Heart left ventricle (tissue), 16 donors: ENCODE measurements at regions of chr1 and their contacts with region 1.

Region 1: DNA sequence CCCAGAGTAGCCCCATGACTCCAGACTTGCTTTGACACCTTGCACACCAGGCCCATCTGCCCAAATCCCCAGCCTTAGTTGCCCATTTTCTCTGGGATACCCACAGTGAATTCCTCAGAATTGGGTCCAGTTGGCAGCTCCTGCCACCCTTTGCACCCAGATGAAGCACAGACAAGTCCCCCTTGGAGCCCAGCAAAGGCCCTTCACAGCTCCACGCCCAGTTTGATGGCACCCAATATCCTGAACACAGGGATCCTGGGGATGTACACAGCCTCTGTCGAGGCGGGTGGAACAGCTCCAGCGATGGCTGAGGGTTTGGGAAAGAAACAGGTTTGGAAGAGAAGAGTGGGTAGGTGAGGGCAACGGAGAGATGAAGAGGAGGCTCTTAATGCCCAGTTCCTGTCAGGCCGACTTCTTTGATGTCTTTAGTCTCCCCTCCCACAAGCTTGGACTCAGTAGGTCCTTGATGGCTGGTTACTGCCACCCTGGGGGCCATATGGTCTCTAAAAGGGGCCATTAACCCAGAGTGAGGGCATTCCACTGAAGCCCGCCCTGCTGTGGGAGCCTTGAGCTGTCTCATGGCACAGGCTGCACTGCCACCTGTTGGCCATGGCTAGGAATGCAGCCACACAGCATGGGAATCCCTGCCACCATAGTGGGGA is 21.7 kb downstream of the TMEM53 start:
- DNase-seq: peak; percentile 64 to 83 (median 73)
- ATAC-seq: peak; percentile 55 to 81 (median 78)
- H3K4me3 ChIP-seq: no peak overlapping the region
- H3K27ac ChIP-seq: no peak overlapping the region
- H3K4me1 ChIP-seq: peaks cover 0 to 11% (median 0%) of the 10 kb centered on the region in 12 donors
- H3K27me3 ChIP-seq: no peaks in the 10 kb centered on the region
- CTCF ChIP-seq: peak; percentile 87 to 96 (median 91)
- POLR2A ChIP-seq: no peak

Region 2: DNA sequence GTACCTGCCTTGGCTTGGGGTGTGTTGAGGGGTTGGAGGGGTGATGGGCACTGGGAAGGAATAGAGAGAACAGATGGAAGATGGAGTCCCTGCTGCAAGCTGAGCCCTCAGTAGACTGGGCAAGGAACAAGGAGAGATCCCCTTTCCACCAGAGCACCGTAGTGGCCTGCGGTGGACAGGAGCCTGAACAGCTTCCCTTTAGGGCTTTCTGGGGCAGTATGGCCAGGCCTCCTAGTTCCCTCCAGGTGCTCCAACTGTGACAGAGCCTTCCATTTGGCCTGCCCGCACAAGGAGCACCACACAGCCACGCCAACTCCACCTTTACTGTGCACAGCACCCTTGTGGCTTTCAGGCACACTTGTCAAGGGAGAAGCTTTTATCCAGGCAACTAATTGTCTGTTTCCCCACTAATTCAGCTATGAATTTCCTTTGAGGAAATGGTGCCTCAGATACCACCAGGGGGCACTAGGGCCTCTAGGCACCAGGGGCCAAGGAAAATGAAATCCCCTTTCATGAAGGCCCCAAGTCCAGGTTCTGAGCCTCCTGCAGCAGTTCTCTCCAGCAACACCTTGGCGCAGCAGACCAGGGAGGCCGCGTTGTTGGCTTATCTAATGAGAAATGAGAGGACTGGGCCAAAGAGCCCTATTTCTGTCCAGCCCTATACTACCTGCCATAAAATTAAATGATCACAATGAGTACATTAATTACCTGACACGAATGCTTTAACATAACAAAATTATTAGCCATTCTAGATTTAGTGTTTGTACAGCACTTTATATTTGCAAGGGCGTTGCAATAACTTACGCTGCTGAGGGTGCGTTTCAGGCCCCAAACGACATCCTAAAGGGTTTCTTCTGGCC is 274.4 kb before region 1 on chr1:
- intact Hi-C with region 1: loop called in 6 of 10 experiments (anchors 2 to 10 kb)
- DNase-seq: peak in 3 of 5 donors; percentile 30 to 50 (median 35)
- ATAC-seq: peak in 1 of 4 donors; percentile 50
- H3K4me3 ChIP-seq: no peak overlapping the region
- H3K27ac ChIP-seq: no peak overlapping the region
- H3K4me1 ChIP-seq: no peaks in the 10 kb centered on the region
- H3K27me3 ChIP-seq: no peaks in the 10 kb centered on the region
- CTCF ChIP-seq: peak; percentile 59 to 85 (median 74)
- POLR2A ChIP-seq: no peak

Region 3: DNA sequence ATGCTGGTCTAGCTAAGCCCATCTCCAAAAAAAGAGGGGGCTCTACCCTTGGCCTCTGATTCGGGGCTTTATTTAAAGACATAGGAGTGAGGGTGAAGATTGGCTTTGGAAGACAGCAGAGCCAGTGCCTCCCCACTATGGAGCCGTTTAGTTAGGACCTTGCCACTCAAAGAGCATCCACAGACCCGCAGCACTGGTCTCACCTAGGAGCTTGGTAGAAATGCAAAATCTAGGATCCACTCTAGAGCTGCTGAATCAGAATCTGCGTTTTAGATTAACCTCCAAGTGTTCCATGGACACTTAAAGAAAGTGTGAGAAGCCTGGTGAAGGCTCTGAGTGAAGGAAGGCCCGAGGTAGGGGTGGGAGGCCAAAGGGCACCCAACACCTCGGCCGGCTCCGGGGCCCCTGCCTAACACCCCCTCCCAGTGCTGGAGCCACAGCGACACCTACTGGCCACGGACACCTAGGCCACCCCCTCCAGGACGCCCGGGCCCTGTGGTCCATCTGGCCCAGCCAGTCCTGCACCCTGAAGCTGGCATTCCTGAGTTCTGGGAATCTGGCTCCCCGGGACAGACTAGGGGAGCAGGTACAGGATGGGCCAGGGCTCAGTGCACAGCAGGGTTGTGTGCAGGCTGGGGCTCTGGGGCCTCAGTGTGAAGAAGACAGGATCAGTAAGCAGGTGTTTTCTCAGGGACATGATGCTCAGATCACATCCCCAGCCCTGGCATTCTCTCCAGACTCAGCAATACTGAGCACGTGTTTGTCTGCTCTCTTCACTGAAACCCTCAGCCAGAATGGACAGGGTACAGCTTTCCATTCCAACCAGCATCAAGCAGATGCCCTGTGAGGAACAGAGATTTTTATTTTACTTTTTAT is 57.5 kb before region 1 on chr1:
- intact Hi-C with region 1: no loop called
- DNase-seq: peak; percentile 77 to 93 (median 79)
- ATAC-seq: peak; percentile 92 to 96 (median 94)
- H3K4me3 ChIP-seq: no peak overlapping the region
- H3K27ac ChIP-seq: no peak overlapping the region
- H3K4me1 ChIP-seq: peaks cover 0 to 3% (median 0%) of the 10 kb centered on the region in 12 donors
- H3K27me3 ChIP-seq: peaks cover 0 to 11% (median 0%) of the 10 kb centered on the region in 9 donors
- CTCF ChIP-seq: peak in 11 of 12 donors; percentile 88 to 99 (median 98)
- POLR2A ChIP-seq: no peak

Region 4: GRCh38 chr1:44609412-44609767 is 43.2 kb before region 1 on chr1:
- intact Hi-C with region 1: loop called (anchors 1 to 2 kb)
- DNase-seq: peak in 4 of 5 donors; percentile 37 to 68 (median 51)
- ATAC-seq: peak; percentile 31 to 78 (median 76)
- H3K4me3 ChIP-seq: no peak overlapping the region
- H3K27ac ChIP-seq: no peak overlapping the region
- H3K4me1 ChIP-seq: no peaks in the 10 kb centered on the region
- H3K27me3 ChIP-seq: peaks cover 0 to 21% (median 0%) of the 10 kb centered on the region in 9 donors
- CTCF ChIP-seq: peak in 11 of 12 donors; percentile 29 to 60 (median 51)
- POLR2A ChIP-seq: no peak

Region 5: DNA sequence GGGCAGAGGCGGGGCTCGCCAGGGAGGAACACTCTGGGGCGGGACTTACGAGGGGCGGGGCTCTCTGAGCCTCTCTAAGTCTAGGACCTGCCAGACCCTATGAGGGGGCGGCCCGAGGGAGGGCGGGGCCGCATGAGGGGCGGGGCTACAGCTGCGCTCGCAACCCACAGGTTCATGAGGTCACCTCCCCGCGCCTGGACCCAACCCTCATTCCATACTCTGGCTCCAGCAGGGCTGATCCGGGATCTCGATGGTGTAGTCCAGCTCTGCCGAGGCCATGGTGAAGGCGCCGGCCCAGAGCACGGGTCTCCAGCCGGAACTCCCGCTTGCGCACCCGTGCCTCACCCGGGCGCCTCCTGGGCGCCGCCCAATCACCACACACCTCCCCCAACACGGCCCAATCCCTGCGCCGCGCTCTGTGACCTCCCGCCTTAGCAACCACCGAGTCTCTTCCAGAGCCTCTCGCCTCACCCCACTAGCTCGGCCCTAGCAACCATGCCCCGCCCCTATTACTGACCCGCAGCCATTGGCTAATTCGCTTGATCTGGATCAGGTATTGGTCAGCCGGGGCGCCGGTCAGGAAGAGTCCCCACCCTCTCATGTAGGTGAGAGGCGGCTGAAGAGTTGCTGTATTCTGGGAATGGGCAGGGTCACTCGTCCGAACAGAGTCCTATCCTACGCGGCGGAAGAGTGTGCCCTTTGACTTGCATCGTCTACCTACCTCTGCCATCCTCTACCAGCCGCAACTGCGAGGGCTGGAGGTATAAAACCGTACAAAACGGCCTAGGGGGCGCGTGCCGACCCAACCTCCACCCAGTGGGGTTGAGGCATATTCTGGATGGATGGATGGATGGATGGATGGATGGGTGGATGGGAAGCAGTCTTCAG is 21.8 kb after region 1 on chr1 and contains the starts of genes ARMH1 and TMEM53:
- intact Hi-C with region 1: loop called in 1 of 10 experiments (anchors 1 kb)
- DNase-seq: peak; percentile 99 to 100 (median 99)
- ATAC-seq: peak; percentile 96 to 98 (median 97)
- H3K4me3 ChIP-seq: peak within 1 kb of the TSS; percentile 30 to 85 (median 68)
- H3K27ac ChIP-seq: peak within 1 kb of the TSS; percentile 81 to 98 (median 96)
- H3K4me1 ChIP-seq: peaks cover 0 to 70% (median 21%) of the 10 kb centered on the region in 12 donors
- H3K27me3 ChIP-seq: no peaks in the 10 kb centered on the region
- CTCF ChIP-seq: no peak
- POLR2A ChIP-seq: peak in 1 of 2 donors; percentile 56
- total RNA-seq, gene ARMH1: 0.33 to 9.9 (median 0.64) TPM in 6 of 9 donors, not detected in the others
- total RNA-seq, gene TMEM53: 8.5 to 18.1 (median 12.5) TPM

Region 6: GRCh38 chr1:44862829-44863401 is 210.3 kb after region 1 on chr1:
- intact Hi-C with region 1: no loop called
- DNase-seq: no peak
- ATAC-seq: no peak
- H3K4me3 ChIP-seq: no peak overlapping the region
- H3K27ac ChIP-seq: no peak overlapping the region
- H3K4me1 ChIP-seq: peaks cover 0 to 33% (median 11%) of the 10 kb centered on the region in 12 donors
- H3K27me3 ChIP-seq: no peaks in the 10 kb centered on the region
- CTCF ChIP-seq: no peak
- POLR2A ChIP-seq: no peak